Heart right ventricle (tissue), 16 donors: ENCODE measurements at regions of chr4 and their contacts with region 1.

Region 1: DNA sequence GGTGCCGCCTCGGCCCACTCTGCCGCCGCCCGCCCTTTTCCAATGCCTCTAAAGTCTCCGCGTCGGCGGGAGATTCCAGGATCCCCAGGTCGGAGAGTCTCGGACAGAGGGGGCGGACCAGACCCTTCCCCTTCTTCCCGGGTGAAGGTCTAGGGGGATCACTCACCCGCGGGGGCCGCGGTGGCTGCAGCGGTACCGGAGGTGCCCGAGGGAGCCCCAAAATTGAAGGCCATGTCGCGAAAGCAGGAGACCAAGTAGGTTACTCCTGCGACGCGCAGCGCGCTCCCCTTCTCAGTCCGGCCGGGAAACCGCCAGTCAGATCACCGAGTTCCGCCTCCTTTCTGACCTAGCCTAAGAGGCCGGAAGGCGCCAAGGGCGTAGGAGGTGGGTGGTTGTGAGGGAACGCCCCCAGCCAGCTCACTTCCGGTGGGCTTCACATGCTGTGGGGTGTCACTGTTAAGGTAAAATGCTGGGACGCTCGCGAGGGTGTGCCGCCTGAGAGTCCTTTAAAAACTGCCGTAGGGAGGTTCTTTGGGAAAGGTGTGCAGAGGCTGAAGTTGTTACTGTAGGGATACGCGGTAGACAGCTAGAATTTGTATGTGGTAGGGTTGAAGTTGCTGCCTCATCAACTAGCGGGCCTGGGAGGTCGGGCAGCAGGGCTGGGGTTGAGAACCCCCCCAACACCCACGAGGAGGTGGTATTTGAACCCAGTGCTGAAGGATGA is at the start of gene NUP54:
- DNase-seq: peak; percentile 93
- ATAC-seq: peak; percentile 99 to 100 (median 99)
- H3K4me3 ChIP-seq: peak within 1 kb of the TSS; percentile 75 to 98 (median 89)
- H3K27ac ChIP-seq: peak within 1 kb of the TSS in 9 of 10 donors; percentile 83 to 97 (median 90)
- H3K4me1 ChIP-seq: peaks cover 5 to 37% (median 29%) of the 10 kb centered on the region in 9 donors
- H3K27me3 ChIP-seq: no peaks in the 10 kb centered on the region
- CTCF ChIP-seq: no peak
- total RNA-seq, gene NUP54: 16.1 to 22.6 (median 18.9) TPM

Region 2: DNA sequence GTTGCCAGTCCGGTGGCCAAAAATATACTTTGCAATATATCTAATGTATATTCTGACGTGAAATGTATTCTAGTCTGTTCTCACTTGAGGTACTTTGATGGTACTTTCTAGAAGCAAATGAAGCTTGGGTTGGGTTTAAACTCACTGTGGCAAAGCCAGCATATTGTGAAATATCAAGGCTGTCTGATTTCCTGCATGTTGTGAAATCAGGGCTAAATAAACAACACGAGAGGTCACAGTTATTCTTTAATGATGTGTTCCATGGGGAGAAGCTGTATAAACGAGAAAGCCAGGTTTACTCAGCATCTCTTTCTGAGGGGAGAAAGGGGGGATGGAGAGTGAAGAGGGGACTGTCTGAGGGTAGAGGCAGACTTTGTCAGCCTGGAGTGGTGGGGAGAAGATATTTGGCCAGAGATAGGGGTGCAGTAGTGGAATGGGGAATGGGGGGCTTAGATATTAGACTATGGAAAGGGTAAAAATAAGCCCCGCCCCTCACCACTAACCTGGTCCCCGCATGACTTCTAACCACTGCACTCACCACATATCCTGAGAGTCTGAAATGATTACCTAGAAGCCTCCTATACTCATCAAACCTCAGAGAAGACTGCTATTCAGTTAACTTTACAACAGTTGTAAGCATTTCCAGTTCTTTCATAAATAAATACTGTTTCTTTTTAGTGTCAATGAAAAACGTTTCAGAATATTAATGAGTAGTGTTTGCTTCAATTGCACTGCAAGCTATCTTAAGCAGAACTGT is 71.2 kb after region 1 on chr4:
- intact Hi-C with region 1: loop called in 2 of 10 experiments (anchors 5 kb)
- DNase-seq: no peak
- ATAC-seq: peak in 4 of 8 donors; percentile 30 to 76 (median 50)
- H3K4me3 ChIP-seq: no peak overlapping the region
- H3K27ac ChIP-seq: peak overlapping the region in 1 of 10 donors; percentile 17
- H3K4me1 ChIP-seq: peaks cover 1 to 42% (median 9%) of the 10 kb centered on the region in 9 donors
- H3K27me3 ChIP-seq: no peaks in the 10 kb centered on the region
- CTCF ChIP-seq: no peak